ENCODE measurements at regions of chr3 and their contacts with region 1.

Region 1: GRCh38 chr3:171772427-171773056 is 37.7 kb downstream of the PLD1 start:
- DNase-seq: peak; percentile 82
- H3K4me3 Mint-ChIP-seq: no peak overlapping the region
- H3K27ac Mint-ChIP-seq: no peak overlapping the region
- H3K4me1 Mint-ChIP-seq: peaks cover 81% of the 10 kb centered on the region
- H3K27me3 Mint-ChIP-seq: no peaks in the 10 kb centered on the region
- CTCF ChIP-seq: peak; percentile 77

Region 2: GRCh38 chr3:171417813-171418212 is 354.7 kb before region 1 on chr3:
- CTCF ChIA-PET with region 1: no interaction called
- intact Hi-C with region 1: no loop called
- DNase-seq: peak; percentile 18
- H3K4me3 Mint-ChIP-seq: no peak overlapping the region
- H3K27ac Mint-ChIP-seq: no peak overlapping the region
- H3K4me1 Mint-ChIP-seq: peaks cover 14% of the 10 kb centered on the region
- H3K27me3 Mint-ChIP-seq: no peaks in the 10 kb centered on the region
- CTCF ChIP-seq: no peak

Region 3: GRCh38 chr3:171614318-171614921 is 158.1 kb before region 1 on chr3:
- CTCF ChIA-PET with region 1: interaction called, 57 read pairs
- intact Hi-C with region 1: no loop called
- DNase-seq: peak; percentile 68
- H3K4me3 Mint-ChIP-seq: no peak overlapping the region
- H3K27ac Mint-ChIP-seq: no peak overlapping the region
- H3K4me1 Mint-ChIP-seq: peaks cover 30% of the 10 kb centered on the region
- H3K27me3 Mint-ChIP-seq: no peaks in the 10 kb centered on the region
- CTCF ChIP-seq: peak; percentile 93

Region 4: GRCh38 chr3:171703756-171704401 is 68.7 kb before region 1 on chr3:
- CTCF ChIA-PET with region 1: interaction called, 13 read pairs
- intact Hi-C with region 1: loop called (anchors 1 kb)
- DNase-seq: peak; percentile 72
- H3K4me3 Mint-ChIP-seq: no peak overlapping the region
- H3K27ac Mint-ChIP-seq: no peak overlapping the region
- H3K4me1 Mint-ChIP-seq: no peaks in the 10 kb centered on the region
- H3K27me3 Mint-ChIP-seq: no peaks in the 10 kb centered on the region
- CTCF ChIP-seq: peak; percentile 80

Region 5: GRCh38 chr3:171743327-171744157 is 29.0 kb before region 1 on chr3:
- CTCF ChIA-PET with region 1: interaction called, 11 read pairs
- intact Hi-C with region 1: no loop called
- DNase-seq: no peak
- H3K4me3 Mint-ChIP-seq: no peak overlapping the region
- H3K27ac Mint-ChIP-seq: no peak overlapping the region
- H3K4me1 Mint-ChIP-seq: peaks cover 36% of the 10 kb centered on the region
- H3K27me3 Mint-ChIP-seq: no peaks in the 10 kb centered on the region
- CTCF ChIP-seq: no peak

Region 6: GRCh38 chr3:171791695-171792082 is 19.1 kb after region 1 on chr3:
- CTCF ChIA-PET with region 1: interaction called, 15 read pairs
- intact Hi-C with region 1: no loop called
- DNase-seq: peak; percentile 50
- H3K4me3 Mint-ChIP-seq: peak overlapping the region; percentile 11
- H3K27ac Mint-ChIP-seq: peak overlapping the region; percentile 34
- H3K4me1 Mint-ChIP-seq: peaks cover 47% of the 10 kb centered on the region
- H3K27me3 Mint-ChIP-seq: no peaks in the 10 kb centered on the region
- CTCF ChIP-seq: no peak

Region 7: GRCh38 chr3:171822431-171823106 is 50.0 kb after region 1 on chr3:
- CTCF ChIA-PET with region 1: interaction called, 44 read pairs
- intact Hi-C with region 1: no loop called
- DNase-seq: no peak
- H3K4me3 Mint-ChIP-seq: no peak overlapping the region
- H3K27ac Mint-ChIP-seq: peak overlapping the region; percentile 6
- H3K4me1 Mint-ChIP-seq: peaks cover 47% of the 10 kb centered on the region
- H3K27me3 Mint-ChIP-seq: no peaks in the 10 kb centered on the region
- CTCF ChIP-seq: no peak

Measured in Calu3 (cell line).